Upper lobe of right lung (tissue), 1 donor: ENCODE measurements at regions of chr11 and their contacts with region 1.

Region 1: GRCh38 chr11:70191495-70192140 is 11.5 kb upstream of the FADD start:
- DNase-seq: peak; percentile 87
- ATAC-seq: peak; percentile 90
- H3K4me3 ChIP-seq: no peak overlapping the region
- H3K27ac ChIP-seq: no peak overlapping the region
- H3K4me1 ChIP-seq: no peaks in the 10 kb centered on the region
- H3K27me3 ChIP-seq: no peaks in the 10 kb centered on the region
- CTCF ChIP-seq: peak; percentile 86

Region 2: GRCh38 chr11:69683764-69684333 is 507.8 kb before region 1 on chr11:
- intact Hi-C with region 1: loop called (anchors 10 kb)
- DNase-seq: peak; percentile 66
- ATAC-seq: peak; percentile 59
- H3K4me3 ChIP-seq: no peak overlapping the region
- H3K27ac ChIP-seq: no peak overlapping the region
- H3K4me1 ChIP-seq: peaks cover 8% of the 10 kb centered on the region
- H3K27me3 ChIP-seq: peaks cover 12% of the 10 kb centered on the region
- CTCF ChIP-seq: peak; percentile 37

Region 3: GRCh38 chr11:69919659-69920424 is 271.8 kb before region 1 on chr11:
- intact Hi-C with region 1: loop called (anchors 5 kb)
- DNase-seq: no peak
- ATAC-seq: no peak
- H3K4me3 ChIP-seq: no peak overlapping the region
- H3K27ac ChIP-seq: no peak overlapping the region
- H3K4me1 ChIP-seq: peaks cover 25% of the 10 kb centered on the region
- H3K27me3 ChIP-seq: peaks cover 3% of the 10 kb centered on the region
- CTCF ChIP-seq: no peak